SK-N-SH (cell line): ENCODE measurements at regions of chr7 and their contacts with region 1.

Region 1: GRCh38 chr7:100478966-100479665 is at the start of gene TSC22D4:
- DNase-seq: peak; percentile 97
- H3K4me3 ChIP-seq: peak within 1 kb of the TSS; percentile 71 to 99
- H3K27ac ChIP-seq: peak within 1 kb of the TSS; percentile 76 to 78
- H3K4me1 ChIP-seq: peaks cover 16 to 27% of the 10 kb centered on the region in 2 experiments; a peak in 3 of 4 replicates
- H3K27me3 ChIP-seq: no peaks in the 10 kb centered on the region
- CTCF ChIP-seq: no peak
- EP300 ChIP-seq: peak in 1 of 2 experiments; percentile 25; a peak in 1 of 4 replicates
- RAD21 ChIP-seq: no peak
- polyA plus RNA-seq, gene TSC22D4: 20.3 and 32.7 TPM in 2 replicates

Region 2: DNA sequence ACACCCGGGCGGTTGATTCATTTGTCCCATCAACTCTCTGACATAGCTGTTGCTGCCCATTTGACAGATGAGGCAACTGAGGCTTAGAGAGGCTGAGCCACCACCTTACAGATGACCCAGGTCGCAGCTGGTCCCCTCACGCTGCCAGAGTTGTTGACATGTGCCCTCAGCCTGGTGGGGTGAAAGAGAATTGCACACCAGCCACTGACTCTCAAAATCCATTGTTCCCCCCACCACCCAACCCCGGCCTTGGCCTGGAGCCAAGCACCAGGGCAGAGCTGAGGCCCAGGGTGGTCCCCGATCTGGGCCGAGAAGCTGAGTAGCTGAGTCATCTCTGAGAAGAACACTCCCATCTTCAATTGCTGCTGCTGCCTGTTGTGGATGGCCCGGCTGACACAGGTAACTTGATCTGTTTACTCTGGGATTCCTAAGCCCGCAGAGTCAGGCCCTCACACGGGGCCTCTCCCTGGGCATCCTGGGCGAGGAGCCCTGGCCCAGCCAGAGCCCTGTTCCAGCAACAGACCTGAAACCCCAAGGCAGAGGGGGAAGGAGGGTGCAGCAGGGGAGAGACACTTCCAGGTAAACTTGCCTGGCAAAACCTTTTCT is 231.9 kb before region 1 on chr7:
- CTCF ChIA-PET with region 1: no interaction called
- POLR2A ChIA-PET with region 1: no interaction called
- DNase-seq: peak; percentile 48
- H3K4me3 ChIP-seq: no peak overlapping the region; a peak in 1 of 4 replicates
- H3K27ac ChIP-seq: no peak overlapping the region
- H3K4me1 ChIP-seq: 0 out of 4 replicates have a peak, but pooled peaks cover 0 to 8% of the 10 kb centered on the region in 2 experiments
- H3K27me3 ChIP-seq: no peaks in the 10 kb centered on the region
- CTCF ChIP-seq: peak; percentile 24; the same call in 1 of the 2 replicates
- EP300 ChIP-seq: peak in 1 of 2 experiments; percentile 57; a peak in 1 of 4 replicates
- RAD21 ChIP-seq: no peak

Region 3: GRCh38 chr7:100369105-100369504 is 110.0 kb before region 1 on chr7:
- CTCF ChIA-PET with region 1: no interaction called
- POLR2A ChIA-PET with region 1: no interaction called
- DNase-seq: no peak
- H3K4me3 ChIP-seq: no peak overlapping the region
- H3K27ac ChIP-seq: no peak overlapping the region
- H3K4me1 ChIP-seq: peaks cover 5 to 7% of the 10 kb centered on the region in 2 experiments; a peak in 1 of 4 replicates
- H3K27me3 ChIP-seq: no peaks in the 10 kb centered on the region
- CTCF ChIP-seq: no peak
- EP300 ChIP-seq: no peak
- RAD21 ChIP-seq: no peak

Region 4: GRCh38 chr7:100428199-100428966 is 50.7 kb before region 1 on chr7 and contains the start of gene ZCWPW1:
- CTCF ChIA-PET with region 1: interaction called, 11 read pairs
- POLR2A ChIA-PET with region 1: no interaction called
- DNase-seq: peak; percentile 94
- H3K4me3 ChIP-seq: peak within 1 kb of the TSS; percentile 78 to 95
- H3K27ac ChIP-seq: peak within 1 kb of the TSS; percentile 99 to 100
- H3K4me1 ChIP-seq: peaks cover 17 to 33% of the 10 kb centered on the region in 2 experiments; a peak in 3 of 4 replicates
- H3K27me3 ChIP-seq: no peaks in the 10 kb centered on the region
- CTCF ChIP-seq: no peak
- EP300 ChIP-seq: no peak
- RAD21 ChIP-seq: no peak
- polyA plus RNA-seq, gene ZCWPW1: 3.4 and 4.1 TPM in 2 replicates

Region 5: DNA sequence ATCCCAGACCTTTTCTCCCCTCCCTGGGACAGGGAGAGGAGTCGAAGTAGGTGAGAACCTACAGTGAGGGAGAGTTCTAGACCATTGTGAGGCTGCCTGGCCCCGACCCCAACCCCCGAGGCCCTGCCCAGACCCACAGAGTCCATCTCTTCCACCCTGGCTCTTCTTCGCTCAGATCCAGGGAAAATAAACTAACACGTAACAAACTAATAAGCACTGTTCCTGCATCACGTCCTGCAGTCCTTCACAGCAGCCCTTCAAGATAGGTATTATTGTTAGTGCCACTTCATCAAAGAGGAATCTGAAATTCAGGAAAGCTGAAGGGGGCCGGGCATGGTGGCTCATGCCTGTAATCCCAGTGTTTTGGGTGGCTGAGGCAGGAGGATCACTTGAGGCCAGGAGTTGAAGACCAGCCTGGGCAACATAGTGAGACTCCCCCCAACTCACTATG is 14.9 kb before region 1 on chr7 and contains the start of gene SPACDR:
- CTCF ChIA-PET with region 1: interaction called, 152 read pairs
- POLR2A ChIA-PET with region 1: interaction called, 10 read pairs
- DNase-seq: no peak
- H3K4me3 ChIP-seq: no peak within 1 kb of the TSS
- H3K27ac ChIP-seq: no peak within 1 kb of the TSS
- H3K4me1 ChIP-seq: peaks cover 3 to 15% of the 10 kb centered on the region in 2 experiments; a peak in 2 of 4 replicates
- H3K27me3 ChIP-seq: no peaks in the 10 kb centered on the region
- CTCF ChIP-seq: no peak
- EP300 ChIP-seq: no peak
- RAD21 ChIP-seq: no peak
- polyA plus RNA-seq, gene SPACDR: 0.93 and 1.5 TPM in 2 replicates

Region 6: DNA sequence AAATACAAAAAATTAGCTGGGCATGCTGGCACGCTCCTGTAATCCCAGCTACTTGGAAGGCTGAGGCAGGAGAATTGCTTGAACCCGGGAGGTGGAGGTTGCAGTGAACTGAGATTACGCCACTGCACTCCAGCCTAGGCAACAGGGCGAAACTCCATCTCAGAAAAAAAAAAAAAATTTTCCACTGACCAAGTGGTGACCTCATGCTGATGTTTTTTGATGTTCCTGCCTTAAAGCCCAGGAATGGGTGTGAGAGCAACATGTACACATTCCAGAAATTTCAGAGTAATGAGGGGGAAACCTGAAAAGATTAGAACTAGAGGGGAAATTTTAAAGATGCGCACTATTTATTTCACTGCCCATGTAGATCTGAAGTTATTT is 24.2 kb after region 1 on chr7:
- CTCF ChIA-PET with region 1: interaction called, 28 read pairs
- POLR2A ChIA-PET with region 1: interaction called, 3 read pairs
- DNase-seq: no peak
- H3K4me3 ChIP-seq: no peak overlapping the region
- H3K27ac ChIP-seq: no peak overlapping the region
- H3K4me1 ChIP-seq: no peaks in the 10 kb centered on the region; a peak in 1 of 4 replicates
- H3K27me3 ChIP-seq: no peaks in the 10 kb centered on the region
- CTCF ChIP-seq: no peak
- EP300 ChIP-seq: no peak
- RAD21 ChIP-seq: no peak

Region 7: GRCh38 chr7:100538654-100539435 is 59.7 kb after region 1 on chr7 and contains the start of gene AGFG2:
- CTCF ChIA-PET with region 1: interaction called, 56 read pairs
- POLR2A ChIA-PET with region 1: no interaction called
- DNase-seq: peak; percentile 100
- H3K4me3 ChIP-seq: peak within 1 kb of the TSS; percentile 69 to 92
- H3K27ac ChIP-seq: peak within 1 kb of the TSS in 1 of 2 experiments; percentile 63; a peak in 2 of 4 replicates
- H3K4me1 ChIP-seq: peaks cover 0 to 11% of the 10 kb centered on the region in 2 experiments; a peak in 2 of 4 replicates
- H3K27me3 ChIP-seq: no peaks in the 10 kb centered on the region
- CTCF ChIP-seq: no peak
- EP300 ChIP-seq: 0 out of 4 replicates have a peak, but pooled peaks of 1 of the 2 experiments have one; percentile 10
- RAD21 ChIP-seq: no peak
- polyA plus RNA-seq, gene AGFG2: 16.1 and 23.1 TPM in 2 replicates

Region 8: GRCh38 chr7:100563809-100564400 is 84.8 kb after region 1 on chr7:
- CTCF ChIA-PET with region 1: interaction called, 151 read pairs
- POLR2A ChIA-PET with region 1: no interaction called
- DNase-seq: peak; percentile 95
- H3K4me3 ChIP-seq: no peak overlapping the region; a peak in 1 of 4 replicates
- H3K27ac ChIP-seq: no peak overlapping the region; a peak in 1 of 4 replicates
- H3K4me1 ChIP-seq: peaks cover 0 to 24% of the 10 kb centered on the region in 2 experiments; a peak in 1 of 4 replicates
- H3K27me3 ChIP-seq: no peaks in the 10 kb centered on the region
- CTCF ChIP-seq: peak; percentile 98
- EP300 ChIP-seq: no peak
- RAD21 ChIP-seq: peak; percentile 84

Region 9: DNA sequence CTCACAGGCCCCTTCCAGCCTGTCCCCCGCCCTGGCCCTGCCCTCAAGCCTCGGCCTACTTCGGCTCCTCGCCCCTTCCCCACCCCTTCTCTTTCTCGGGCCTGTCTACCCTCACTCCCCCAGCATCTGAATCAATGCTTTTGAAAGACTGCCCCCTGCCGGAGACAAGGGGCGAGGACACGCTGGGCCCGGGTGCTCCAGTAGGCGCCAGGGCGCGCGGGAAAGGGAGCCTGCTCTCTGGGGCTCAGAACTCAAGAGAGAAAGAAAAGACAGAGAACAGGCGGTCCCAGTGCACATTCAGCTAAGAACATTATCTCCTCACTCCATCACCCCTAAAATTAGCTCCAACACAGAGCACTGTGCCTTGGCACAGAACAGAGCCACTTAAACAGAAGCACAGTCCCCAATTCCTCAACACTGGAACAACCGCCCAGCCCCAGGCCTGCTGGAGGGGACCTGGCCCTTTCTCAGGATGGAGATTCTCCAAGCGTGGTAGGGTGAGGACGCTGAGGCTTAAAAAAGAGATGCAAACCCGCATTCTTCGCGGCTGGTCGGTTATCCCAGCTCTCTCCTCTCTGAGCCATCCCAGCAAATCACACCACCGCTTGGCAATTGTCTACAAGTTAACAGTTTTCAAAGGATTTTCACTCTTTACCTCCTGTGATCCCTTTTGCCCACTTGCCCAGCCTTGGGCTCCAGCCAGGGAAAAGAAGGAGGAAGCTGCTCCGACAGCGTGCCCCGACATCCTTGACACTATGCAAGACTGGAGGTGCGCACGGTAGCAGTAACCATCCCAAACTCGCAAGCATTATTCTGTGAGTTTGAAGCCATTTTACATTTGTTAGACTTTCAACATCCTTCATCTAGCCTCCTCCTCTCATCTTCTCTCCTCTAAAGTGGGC is 212.8 kb after region 1 on chr7:
- CTCF ChIA-PET with region 1: interaction called, 15 read pairs
- POLR2A ChIA-PET with region 1: no interaction called
- DNase-seq: peak; percentile 98
- H3K4me3 ChIP-seq: peak overlapping the region; percentile 66 to 87
- H3K27ac ChIP-seq: peak overlapping the region in 1 of 2 experiments; percentile 43; a peak in 2 of 4 replicates
- H3K4me1 ChIP-seq: peaks cover 18 to 23% of the 10 kb centered on the region in 2 experiments
- H3K27me3 ChIP-seq: no peaks in the 10 kb centered on the region
- CTCF ChIP-seq: peak; percentile 98
- EP300 ChIP-seq: no peak
- RAD21 ChIP-seq: peak; percentile 89

Region 10: DNA sequence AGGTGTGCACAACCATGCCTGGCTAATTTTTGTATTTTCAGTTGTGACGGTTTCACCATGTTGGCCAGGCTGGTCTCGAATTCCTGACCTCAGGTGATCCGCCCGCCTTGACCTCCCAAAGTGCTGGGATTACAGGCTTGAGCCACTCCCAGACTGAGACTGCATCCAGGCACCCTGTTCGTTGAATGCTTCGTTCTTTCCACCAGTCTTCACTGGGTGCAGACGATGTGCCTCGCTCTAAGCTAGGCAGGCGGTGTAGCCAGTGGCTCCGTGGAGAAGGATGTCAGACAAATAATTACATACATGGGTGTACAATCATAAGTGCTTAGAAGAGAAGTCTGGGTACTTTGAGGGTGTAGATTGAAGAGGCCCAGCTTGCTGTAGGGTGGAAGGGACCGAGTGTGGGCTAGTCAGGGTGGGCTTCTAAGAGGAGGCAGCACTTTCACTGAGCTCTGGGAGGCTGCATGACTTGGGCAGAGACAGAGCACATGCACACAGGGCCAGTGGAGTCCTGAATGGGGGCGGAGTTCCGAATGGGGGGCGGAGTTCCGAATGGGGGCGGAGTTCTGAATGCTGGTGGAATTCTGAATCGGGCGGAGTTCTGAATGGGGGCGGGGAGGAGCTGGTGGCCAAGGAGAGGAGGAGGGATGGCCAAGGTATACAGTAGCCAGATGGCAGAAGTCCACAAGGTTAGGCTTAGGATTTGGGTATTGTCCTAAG is 957.9 kb after region 1 on chr7:
- CTCF ChIA-PET with region 1: no interaction called
- POLR2A ChIA-PET with region 1: no interaction called
- DNase-seq: peak; percentile 62
- H3K4me3 ChIP-seq: no peak overlapping the region
- H3K27ac ChIP-seq: no peak overlapping the region
- H3K4me1 ChIP-seq: peaks cover 0 to 4% of the 10 kb centered on the region in 2 experiments; a peak in 1 of 4 replicates
- H3K27me3 ChIP-seq: peaks cover 40% of the 10 kb centered on the region
- CTCF ChIP-seq: no peak
- EP300 ChIP-seq: no peak
- RAD21 ChIP-seq: no peak